CD8-positive, alpha-beta T cell (primary cell): ENCODE measurements at regions of chr12 and their contacts with region 1.

Region 1: DNA sequence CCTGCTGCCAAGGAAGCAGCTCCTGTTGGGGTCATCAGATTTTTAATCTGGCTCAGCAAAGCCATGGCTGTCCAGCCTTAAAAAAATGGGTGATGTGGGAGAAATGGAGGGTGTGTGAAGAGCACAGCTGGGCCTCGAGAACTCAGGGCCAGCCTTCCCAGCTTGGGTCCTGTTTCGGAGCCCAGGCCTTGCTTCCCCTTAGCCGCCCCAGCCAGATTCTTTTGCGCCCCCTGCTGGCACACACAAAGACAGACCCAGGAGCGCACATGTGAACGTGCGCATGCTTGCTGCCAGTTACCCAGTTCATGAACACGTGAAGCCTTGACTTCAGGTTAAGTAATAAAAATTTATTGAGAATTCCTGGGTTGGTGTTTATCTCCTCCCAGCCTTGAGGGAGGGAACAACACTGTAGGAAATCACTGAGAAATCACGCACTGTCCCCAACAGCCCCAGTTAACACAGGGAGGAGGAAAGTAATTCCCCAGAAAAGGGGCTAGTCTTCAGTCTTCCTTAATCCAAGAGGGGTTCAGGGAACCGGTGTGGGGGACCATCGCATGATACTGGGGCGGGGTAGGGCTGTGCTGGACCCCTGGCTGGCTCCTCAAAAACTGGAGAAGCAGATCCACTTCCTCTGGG is 5.3 kb downstream of the PHB2 start:
- DNase-seq: peak; percentile 74 to 93 (median 88)
- ATAC-seq: peak; percentile 45
- H3K4me3 ChIP-seq: no peak overlapping the region
- H3K4me3 Mint-ChIP-seq: no peak overlapping the region
- H3K27ac ChIP-seq: peak overlapping the region; percentile 20 to 74
- H3K27ac Mint-ChIP-seq: peak overlapping the region; percentile 83
- H3K4me1 ChIP-seq: peaks cover 56% of the 10 kb centered on the region
- H3K4me1 Mint-ChIP-seq: peaks cover 54% of the 10 kb centered on the region
- H3K27me3 ChIP-seq: no peaks in the 10 kb centered on the region
- H3K27me3 Mint-ChIP-seq: no peaks in the 10 kb centered on the region
- CTCF ChIP-seq: peak; percentile 78

Region 2: DNA sequence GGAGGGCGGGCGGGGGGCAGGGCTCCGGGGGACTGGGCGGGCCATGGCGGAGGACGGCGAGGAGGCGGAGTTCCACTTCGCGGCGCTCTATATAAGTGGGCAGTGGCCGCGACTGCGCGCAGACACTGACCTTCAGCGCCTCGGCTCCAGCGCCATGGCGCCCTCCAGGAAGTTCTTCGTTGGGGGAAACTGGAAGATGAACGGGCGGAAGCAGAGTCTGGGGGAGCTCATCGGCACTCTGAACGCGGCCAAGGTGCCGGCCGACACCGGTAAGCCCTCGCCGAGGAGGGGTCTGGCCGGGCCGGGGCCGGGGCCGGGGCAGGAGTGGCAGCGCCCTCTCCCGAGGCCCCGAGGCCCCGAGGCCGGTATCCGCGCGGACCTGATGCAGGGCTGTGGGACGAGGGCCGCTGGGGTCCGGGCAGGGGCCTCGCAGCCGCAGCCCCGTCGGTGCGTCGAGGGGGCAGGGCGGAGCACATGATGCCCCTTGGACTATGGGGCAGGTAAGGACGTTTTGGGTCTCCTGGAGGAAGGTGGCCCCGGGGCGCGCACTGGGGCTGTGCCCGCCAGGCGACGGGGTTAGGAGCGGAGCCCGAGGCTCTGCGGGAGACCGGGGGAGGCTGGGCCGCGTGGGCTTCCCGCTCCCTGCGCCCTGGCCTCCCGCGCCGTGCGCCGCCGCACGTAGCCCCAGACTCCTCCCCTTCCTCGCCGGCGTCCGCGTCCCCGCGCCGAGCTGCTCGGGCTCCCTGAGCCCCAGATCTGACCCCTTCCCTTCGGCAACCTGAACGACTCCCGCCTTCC is 97.5 kb before region 1 on chr12 and contains the start of gene TPI1:
- CTCF ChIA-PET with region 1: interaction called, 18 read pairs
- POLR2A ChIA-PET with region 1: interaction called, 7 read pairs
- intact Hi-C with region 1: loop called (anchors 1 kb)
- DNase-seq: peak; percentile 48 to 86 (median 77)
- ATAC-seq: peak; percentile 70
- H3K4me3 ChIP-seq: peak within 1 kb of the TSS; percentile 54 to 64
- H3K4me3 Mint-ChIP-seq: peak within 1 kb of the TSS; percentile 89
- H3K27ac ChIP-seq: peak within 1 kb of the TSS; percentile 53 to 81
- H3K27ac Mint-ChIP-seq: peak within 1 kb of the TSS; percentile 85
- H3K4me1 ChIP-seq: peaks cover 49% of the 10 kb centered on the region
- H3K4me1 Mint-ChIP-seq: peaks cover 57% of the 10 kb centered on the region
- H3K27me3 ChIP-seq: no peaks in the 10 kb centered on the region
- H3K27me3 Mint-ChIP-seq: no peaks in the 10 kb centered on the region
- CTCF ChIP-seq: no peak
- total RNA-seq, gene TPI1: 59.6 to 64.0 TPM

Region 3: DNA sequence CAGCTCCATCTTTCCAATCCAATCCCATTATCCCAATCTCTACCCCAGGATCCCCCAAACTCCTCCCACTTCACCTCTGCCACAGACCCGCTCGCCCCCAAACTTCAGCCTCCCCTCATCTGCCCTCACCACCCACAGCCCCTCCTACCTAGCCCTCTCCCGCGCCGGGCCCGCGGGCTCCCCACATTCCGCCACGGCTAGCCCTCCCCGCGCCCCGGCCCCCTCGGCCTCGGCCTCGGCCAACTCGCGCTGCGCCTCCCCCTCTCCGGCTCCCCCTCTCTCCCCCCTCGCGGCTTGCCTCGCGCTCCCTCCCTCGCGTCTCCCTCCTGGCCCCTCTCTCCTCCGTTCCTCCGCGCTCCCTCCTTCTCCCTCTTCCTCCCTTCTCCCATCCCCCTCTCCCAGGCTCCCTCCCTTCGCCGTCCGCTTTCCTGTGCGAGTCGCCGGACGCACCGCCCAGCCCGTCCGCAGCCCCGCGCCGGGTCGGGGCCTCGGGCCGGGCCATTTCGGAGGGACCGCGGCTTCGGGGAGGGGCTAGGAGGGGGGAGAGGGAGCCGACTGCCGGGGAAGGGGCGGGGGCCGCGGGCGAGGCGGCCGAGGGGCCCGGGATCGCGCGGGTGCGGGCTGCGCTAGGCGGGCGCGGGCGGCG is 37.6 kb before region 1 on chr12 and contains the start of gene ATN1:
- CTCF ChIA-PET with region 1: interaction called, 179 read pairs
- POLR2A ChIA-PET with region 1: interaction called, 6 read pairs
- intact Hi-C with region 1: loop called (anchors 1 kb)
- DNase-seq: peak in 6 of 9 experiments; percentile 36 to 69 (median 58)
- ATAC-seq: peak; percentile 44
- H3K4me3 ChIP-seq: peak within 1 kb of the TSS; percentile 52 to 64
- H3K4me3 Mint-ChIP-seq: peak within 1 kb of the TSS; percentile 85
- H3K27ac ChIP-seq: peak within 1 kb of the TSS; percentile 51 to 71
- H3K27ac Mint-ChIP-seq: peak within 1 kb of the TSS; percentile 91
- H3K4me1 ChIP-seq: peaks cover 31% of the 10 kb centered on the region
- H3K4me1 Mint-ChIP-seq: peaks cover 44% of the 10 kb centered on the region
- H3K27me3 ChIP-seq: no peaks in the 10 kb centered on the region
- H3K27me3 Mint-ChIP-seq: no peaks in the 10 kb centered on the region
- CTCF ChIP-seq: no peak
- total RNA-seq, gene ATN1: 26.5 to 33.4 TPM

Region 4: GRCh38 chr12:6944381-6945186 is 20.6 kb before region 1 on chr12:
- CTCF ChIA-PET with region 1: interaction called, 531 read pairs
- POLR2A ChIA-PET with region 1: interaction called, 642 read pairs
- intact Hi-C with region 1: loop called (anchors 1 kb)
- DNase-seq: peak; percentile 67 to 94 (median 89)
- ATAC-seq: peak; percentile 51
- H3K4me3 ChIP-seq: peak overlapping the region; percentile 90 to 97
- H3K4me3 Mint-ChIP-seq: peak overlapping the region; percentile 99
- H3K27ac ChIP-seq: peak overlapping the region; percentile 94 to 97
- H3K27ac Mint-ChIP-seq: peak overlapping the region; percentile 100
- H3K4me1 ChIP-seq: peaks cover 56% of the 10 kb centered on the region
- H3K4me1 Mint-ChIP-seq: peaks cover 63% of the 10 kb centered on the region
- H3K27me3 ChIP-seq: no peaks in the 10 kb centered on the region
- H3K27me3 Mint-ChIP-seq: no peaks in the 10 kb centered on the region
- CTCF ChIP-seq: peak; percentile 87

Region 5: DNA sequence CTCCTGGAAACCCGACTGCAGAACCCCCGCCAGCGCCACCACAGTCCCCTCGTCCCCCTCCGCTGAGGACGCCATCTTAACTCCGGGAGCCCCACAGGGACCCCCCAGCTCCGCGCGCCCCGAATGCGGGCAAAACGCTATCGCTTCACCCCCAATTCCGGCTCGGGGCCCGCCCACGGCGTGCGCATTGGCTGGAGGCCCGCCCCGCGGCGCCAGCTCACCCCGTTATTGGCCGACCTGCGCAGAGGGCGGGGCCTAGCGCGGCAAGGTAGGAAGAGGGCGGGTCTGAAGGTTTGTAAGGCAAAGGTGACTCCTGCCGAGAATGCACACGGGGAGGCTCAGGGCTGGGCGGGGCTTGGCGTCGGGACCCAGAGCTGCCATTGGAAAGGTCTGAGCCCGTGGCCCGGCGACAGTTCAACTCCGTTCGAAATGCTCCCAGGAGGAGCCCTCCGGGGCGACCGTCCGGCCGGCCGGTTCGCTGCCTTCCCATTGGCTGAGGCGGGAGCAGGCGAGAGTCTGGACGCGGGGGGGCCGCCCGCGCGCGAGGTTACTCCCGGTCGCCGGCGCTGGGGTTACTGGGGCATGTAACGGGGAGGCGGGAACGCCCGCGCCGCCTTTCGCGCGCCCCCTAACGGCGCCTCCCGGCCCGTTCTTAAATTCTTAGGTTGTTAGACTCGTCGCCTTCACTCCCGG is 53.4 kb after region 1 on chr12 and contains the start of gene LPCAT3:
- CTCF ChIA-PET with region 1: no interaction called
- POLR2A ChIA-PET with region 1: no interaction called
- intact Hi-C with region 1: loop called (anchors 1 kb)
- DNase-seq: peak; percentile 94 to 99 (median 97)
- ATAC-seq: peak; percentile 97
- H3K4me3 ChIP-seq: peak within 1 kb of the TSS; percentile 82 to 99
- H3K4me3 Mint-ChIP-seq: peak within 1 kb of the TSS; percentile 90
- H3K27ac ChIP-seq: peak within 1 kb of the TSS; percentile 79 to 92
- H3K27ac Mint-ChIP-seq: peak within 1 kb of the TSS; percentile 88
- H3K4me1 ChIP-seq: peaks cover 13% of the 10 kb centered on the region
- H3K4me1 Mint-ChIP-seq: peaks cover 37% of the 10 kb centered on the region
- H3K27me3 ChIP-seq: no peaks in the 10 kb centered on the region
- H3K27me3 Mint-ChIP-seq: no peaks in the 10 kb centered on the region
- CTCF ChIP-seq: peak; percentile 85
- total RNA-seq, gene LPCAT3: 24.4 to 27.1 TPM

Region 6: DNA sequence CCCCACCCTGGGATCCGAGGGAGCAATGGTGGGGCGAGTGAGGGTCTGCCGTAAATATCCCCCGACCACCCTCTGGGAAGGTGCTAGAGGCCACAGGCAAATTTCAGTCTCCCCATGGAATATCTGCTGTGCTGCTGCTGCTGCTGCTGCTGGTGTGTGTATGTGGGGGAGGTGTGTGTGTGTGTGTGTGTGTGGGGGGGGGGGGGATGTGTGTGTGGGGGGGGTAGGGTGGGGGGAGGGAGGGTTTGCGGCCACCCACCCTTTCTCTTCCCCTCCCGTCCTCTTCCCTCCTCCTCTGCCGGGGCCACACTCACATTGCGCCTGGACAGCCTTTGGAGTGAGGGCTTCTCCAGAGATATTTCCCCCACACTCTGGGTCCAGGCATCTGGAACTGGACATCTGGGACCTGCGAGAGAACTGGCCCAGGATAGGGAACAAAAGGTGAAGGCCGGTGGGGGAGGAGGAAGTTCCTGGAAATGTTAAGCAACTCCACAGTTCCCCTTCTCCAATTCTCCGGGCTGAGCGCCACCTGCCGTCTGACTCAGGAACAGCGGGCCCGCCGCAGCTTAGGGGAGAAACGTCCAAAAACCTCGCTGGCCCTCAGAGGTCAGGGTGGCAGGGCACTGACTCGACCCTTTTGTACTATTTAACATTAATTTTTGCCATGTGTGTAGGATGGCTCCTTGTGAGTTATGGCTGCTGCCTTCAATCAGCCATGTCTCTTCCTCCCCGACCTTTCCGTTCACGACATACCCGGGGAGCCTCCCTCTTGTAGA is 143.8 kb after region 1 on chr12 and contains the start of gene C1RL:
- CTCF ChIA-PET with region 1: interaction called, 14 read pairs
- POLR2A ChIA-PET with region 1: interaction called, 4 read pairs
- intact Hi-C with region 1: loop called (anchors 5 kb)
- DNase-seq: peak; percentile 58 to 85 (median 77)
- ATAC-seq: peak; percentile 46
- H3K4me3 ChIP-seq: peak within 1 kb of the TSS; percentile 88 to 97
- H3K4me3 Mint-ChIP-seq: peak within 1 kb of the TSS; percentile 94
- H3K27ac ChIP-seq: peak within 1 kb of the TSS; percentile 67 to 80
- H3K27ac Mint-ChIP-seq: peak within 1 kb of the TSS; percentile 93
- H3K4me1 ChIP-seq: peaks cover 16% of the 10 kb centered on the region
- H3K4me1 Mint-ChIP-seq: peaks cover 44% of the 10 kb centered on the region
- H3K27me3 ChIP-seq: no peaks in the 10 kb centered on the region
- H3K27me3 Mint-ChIP-seq: no peaks in the 10 kb centered on the region
- CTCF ChIP-seq: peak; percentile 90
- total RNA-seq, gene C1RL: 8.0 to 9.0 TPM

Region 7: DNA sequence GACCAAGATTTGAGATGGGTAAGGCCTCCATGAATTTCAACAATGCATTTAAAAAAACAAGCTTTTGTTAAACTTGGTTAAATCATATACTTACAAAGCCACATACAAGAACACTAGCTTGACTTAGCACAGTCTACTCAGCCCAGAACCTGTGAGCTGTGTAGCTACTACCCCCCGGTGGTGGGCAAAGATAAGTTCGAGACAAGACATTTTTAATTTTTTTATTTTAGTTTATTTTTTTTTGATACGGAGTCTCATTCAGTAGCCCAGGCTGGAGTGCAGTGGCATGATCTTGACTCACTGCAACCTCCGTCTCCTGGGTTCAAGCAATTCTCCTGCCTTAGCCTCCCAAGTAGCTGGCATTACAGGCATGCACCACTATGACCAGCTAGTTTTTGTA is 1113.3 kb after region 1 on chr12:
- CTCF ChIA-PET with region 1: no interaction called
- POLR2A ChIA-PET with region 1: no interaction called
- intact Hi-C with region 1: loop called in 1 of 2 experiments (anchors 2 kb)
- DNase-seq: peak; percentile 27 to 87 (median 65)
- ATAC-seq: peak; percentile 27
- H3K4me3 ChIP-seq: no peak overlapping the region
- H3K4me3 Mint-ChIP-seq: no peak overlapping the region
- H3K27ac ChIP-seq: no peak overlapping the region
- H3K27ac Mint-ChIP-seq: peak overlapping the region; percentile 97
- H3K4me1 ChIP-seq: peaks cover 26% of the 10 kb centered on the region
- H3K4me1 Mint-ChIP-seq: peaks cover 48% of the 10 kb centered on the region
- H3K27me3 ChIP-seq: no peaks in the 10 kb centered on the region
- H3K27me3 Mint-ChIP-seq: no peaks in the 10 kb centered on the region
- CTCF ChIP-seq: peak; percentile 79